Right cardiac atrium (tissue), 5 donors: ENCODE measurements at regions of chr3 and their contacts with region 1.

Region 1: DNA sequence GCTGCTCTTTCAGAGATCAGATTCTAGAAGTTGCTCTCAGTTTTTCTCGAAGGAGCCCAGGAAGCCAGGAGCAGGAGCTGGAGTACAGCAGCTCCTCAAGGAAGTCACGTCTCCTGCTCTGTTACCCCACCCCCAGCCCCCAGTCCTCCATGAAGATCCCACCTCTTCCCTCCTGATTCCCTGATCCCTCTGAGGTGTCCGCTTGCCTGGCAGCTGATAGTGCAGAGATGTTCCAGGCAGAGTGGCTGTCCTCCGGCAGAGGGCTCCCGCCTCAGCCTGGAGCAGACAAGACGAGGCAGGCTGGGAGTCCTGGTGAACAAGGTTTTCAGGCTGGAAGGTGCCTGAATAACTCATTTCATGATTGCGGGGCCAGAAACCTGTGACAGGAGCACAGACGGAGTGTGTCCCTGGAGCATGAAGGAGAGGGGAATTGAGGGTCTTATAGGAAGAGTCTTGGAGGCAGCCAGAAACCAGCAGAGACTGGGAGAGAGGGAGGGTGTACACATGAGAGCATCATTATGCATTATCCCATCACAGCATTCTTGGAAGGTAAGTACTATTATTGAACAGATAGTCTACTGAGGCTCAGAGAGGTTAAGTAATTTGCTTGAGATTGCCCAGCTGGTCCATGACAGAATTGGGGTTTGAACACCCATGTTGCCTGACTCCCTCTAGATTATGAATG is 1.2 kb downstream of the HRH1 start:
- DNase-seq: peak; percentile 70 to 90 (median 84)
- ATAC-seq: peak; percentile 88 to 89
- H3K4me3 ChIP-seq: peak overlapping the region; percentile 15
- H3K27ac ChIP-seq: no peak overlapping the region
- H3K4me1 ChIP-seq: no peaks in the 10 kb centered on the region
- H3K27me3 ChIP-seq: no peaks in the 10 kb centered on the region

Region 2: GRCh38 chr3:11204697-11205348 is 49.3 kb after region 1 on chr3:
- intact Hi-C with region 1: loop called in 1 of 4 experiments (anchors 5 kb)
- DNase-seq: no peak
- ATAC-seq: no peak
- H3K4me3 ChIP-seq: no peak overlapping the region
- H3K27ac ChIP-seq: no peak overlapping the region
- H3K4me1 ChIP-seq: no peaks in the 10 kb centered on the region
- H3K27me3 ChIP-seq: no peaks in the 10 kb centered on the region

Region 3: DNA sequence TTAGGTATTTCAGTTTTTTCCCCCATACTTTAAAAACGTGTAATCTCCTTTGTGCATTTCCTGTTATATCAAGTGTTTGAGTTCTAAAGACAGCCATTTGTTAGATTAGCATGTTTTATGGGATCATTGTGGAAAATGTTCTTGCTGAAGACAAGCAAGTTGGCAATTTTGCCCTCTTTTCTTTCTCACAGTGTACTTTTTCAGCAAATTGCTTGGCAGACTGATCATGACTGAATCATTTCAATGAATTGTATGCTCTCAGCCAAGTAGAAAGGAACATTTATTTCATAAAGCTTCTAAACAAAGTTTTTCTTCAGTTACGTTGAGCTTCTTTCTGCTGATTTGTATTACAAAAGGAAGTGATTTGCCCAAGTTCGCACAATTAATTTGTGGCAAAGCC is 168.3 kb after region 1 on chr3:
- intact Hi-C with region 1: loop called in 1 of 4 experiments (anchors 10 kb)
- DNase-seq: no peak
- ATAC-seq: peak in 1 of 2 donors; percentile 52
- H3K4me3 ChIP-seq: no peak overlapping the region
- H3K27ac ChIP-seq: no peak overlapping the region
- H3K4me1 ChIP-seq: no peaks in the 10 kb centered on the region
- H3K27me3 ChIP-seq: no peaks in the 10 kb centered on the region